ENCODE measurements at regions of chr4 and their contacts with region 1.

Region 1: GRCh38 chr4:53804719-53805118 is 213.4 kb upstream of the LNX1 start:
- DNase-seq: peak; percentile 53
- ATAC-seq: no peak
- H3K4me3 ChIP-seq: no peak overlapping the region
- H3K4me3 Mint-ChIP-seq: no peak overlapping the region
- H3K27ac ChIP-seq: no peak overlapping the region
- H3K27ac Mint-ChIP-seq: no peak overlapping the region
- H3K4me1 ChIP-seq: no peaks in the 10 kb centered on the region
- H3K4me1 Mint-ChIP-seq: no peaks in the 10 kb centered on the region
- H3K27me3 ChIP-seq: no peaks in the 10 kb centered on the region
- H3K27me3 Mint-ChIP-seq: peaks cover 6% of the 10 kb centered on the region
- CTCF ChIP-seq: peak; percentile 46

Region 2: GRCh38 chr4:53709693-53710092 is 95.0 kb before region 1 on chr4:
- CTCF ChIA-PET with region 1: interaction called, 33 read pairs
- POLR2A ChIA-PET with region 1: no interaction called
- intact Hi-C with region 1: loop called (anchors 1 kb)
- DNase-seq: no peak
- ATAC-seq: no peak
- H3K4me3 ChIP-seq: no peak overlapping the region
- H3K4me3 Mint-ChIP-seq: no peak overlapping the region
- H3K27ac ChIP-seq: no peak overlapping the region
- H3K27ac Mint-ChIP-seq: no peak overlapping the region
- H3K4me1 ChIP-seq: peaks cover 21 to 22% of the 10 kb centered on the region in 2 donors
- H3K4me1 Mint-ChIP-seq: peaks cover 30% of the 10 kb centered on the region
- H3K27me3 ChIP-seq: no peaks in the 10 kb centered on the region
- H3K27me3 Mint-ChIP-seq: no peaks in the 10 kb centered on the region
- CTCF ChIP-seq: no peak

Region 3: GRCh38 chr4:53886090-53886489 is 81.4 kb after region 1 on chr4:
- CTCF ChIA-PET with region 1: no interaction called
- POLR2A ChIA-PET with region 1: no interaction called
- intact Hi-C with region 1: no loop called
- DNase-seq: no peak
- ATAC-seq: no peak
- H3K4me3 ChIP-seq: no peak overlapping the region
- H3K4me3 Mint-ChIP-seq: no peak overlapping the region
- H3K27ac ChIP-seq: no peak overlapping the region
- H3K27ac Mint-ChIP-seq: no peak overlapping the region
- H3K4me1 ChIP-seq: no peaks in the 10 kb centered on the region
- H3K4me1 Mint-ChIP-seq: no peaks in the 10 kb centered on the region
- H3K27me3 ChIP-seq: no peaks in the 10 kb centered on the region
- H3K27me3 Mint-ChIP-seq: peaks cover 10% of the 10 kb centered on the region
- CTCF ChIP-seq: no peak